H1 (cell line): ENCODE measurements at regions of chr12 and their contacts with region 1.

Region 1: DNA sequence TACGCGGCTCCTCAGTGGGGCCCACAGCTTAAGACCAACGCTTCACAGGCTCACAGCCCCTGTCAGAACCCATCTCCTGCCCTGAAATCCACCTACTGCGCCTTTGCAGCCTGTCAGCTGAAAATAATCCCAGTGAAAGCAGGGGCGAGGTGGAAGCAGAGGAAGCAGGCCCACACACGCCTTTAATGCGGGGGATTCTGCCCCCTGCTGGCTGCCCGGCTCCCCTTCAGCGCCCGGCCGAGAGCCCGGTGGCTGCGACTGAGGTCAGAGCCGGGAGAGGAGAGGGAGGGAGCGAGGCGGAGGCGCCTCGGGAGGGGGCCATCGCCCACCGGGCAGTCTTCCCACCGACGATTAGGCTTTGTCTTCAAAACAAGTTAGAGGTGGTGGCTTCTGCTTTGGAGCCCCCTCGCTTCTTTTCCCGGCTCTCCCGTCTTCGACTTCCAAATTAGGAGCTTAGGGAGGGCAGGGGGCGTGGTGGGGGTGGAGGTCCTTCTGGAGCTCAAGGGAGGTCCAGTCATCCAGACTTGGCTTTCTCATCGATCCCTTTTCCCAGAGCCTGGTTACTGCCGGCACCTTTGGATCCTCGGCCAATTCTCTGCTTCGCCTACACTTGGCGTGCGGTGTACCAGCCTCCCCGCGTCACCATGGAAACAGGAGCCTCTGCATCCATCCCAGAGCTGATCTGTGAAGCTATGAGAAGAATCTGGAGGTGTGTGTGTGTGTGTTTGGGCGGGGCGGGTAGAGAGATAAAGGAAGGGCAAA is 25.2 kb upstream of the RND1 start:
- DNase-seq: peak; percentile 51 to 96
- H3K4me3 ChIP-seq: peak overlapping the region; percentile 10 to 65 (median 22)
- H3K27ac ChIP-seq: no peak overlapping the region
- H3K4me1 ChIP-seq: 0 out of 7 replicates have a peak, but pooled peaks cover 0 to 6% (median 2%) of the 10 kb centered on the region in 4 experiments
- H3K27me3 ChIP-seq: no peaks in the 10 kb centered on the region; a peak in 2 of 7 replicates
- CTCF ChIP-seq: peak; percentile 86 to 95 (median 91)
- EP300 ChIP-seq: no peak
- POLR2A ChIP-seq: no peak
- RAD21 ChIP-seq: peak; percentile 90 to 96

Region 2: GRCh38 chr12:48527891-48528675 is 362.8 kb before region 1 on chr12:
- CTCF ChIA-PET with region 1: no interaction called
- POLR2A ChIA-PET with region 1: no interaction called
- DNase-seq: no peak
- H3K4me3 ChIP-seq: no peak overlapping the region
- H3K27ac ChIP-seq: no peak overlapping the region
- H3K4me1 ChIP-seq: no peaks in the 10 kb centered on the region
- H3K27me3 ChIP-seq: no peaks in the 10 kb centered on the region
- CTCF ChIP-seq: no peak
- EP300 ChIP-seq: no peak
- POLR2A ChIP-seq: no peak
- RAD21 ChIP-seq: no peak

Region 3: GRCh38 chr12:48814262-48815125 is 76.3 kb before region 1 on chr12:
- CTCF ChIA-PET with region 1: interaction called, 13 read pairs
- POLR2A ChIA-PET with region 1: interaction called, 4 read pairs
- DNase-seq: peak in 1 of 2 experiments; percentile 94
- H3K4me3 ChIP-seq: peak overlapping the region; percentile 59 to 94 (median 88)
- H3K27ac ChIP-seq: no peak overlapping the region
- H3K4me1 ChIP-seq: peaks cover 0 to 27% (median 19%) of the 10 kb centered on the region in 4 experiments; a peak in 6 of 7 replicates
- H3K27me3 ChIP-seq: peaks cover 17 to 46% (median 36%) of the 10 kb centered on the region in 4 experiments
- CTCF ChIP-seq: peak in 2 of 3 experiments; percentile 95 to 99; a peak in 3 of 4 replicates
- EP300 ChIP-seq: no peak; a peak in 1 of 3 replicates
- POLR2A ChIP-seq: no peak
- RAD21 ChIP-seq: peak in 1 of 2 experiments; percentile 48; a peak in 2 of 4 replicates

Region 4: GRCh38 chr12:48873096-48873495 is 17.7 kb before region 1 on chr12:
- CTCF ChIA-PET with region 1: interaction called, 678 read pairs
- POLR2A ChIA-PET with region 1: interaction called, 651 read pairs
- DNase-seq: no peak
- H3K4me3 ChIP-seq: no peak overlapping the region
- H3K27ac ChIP-seq: no peak overlapping the region
- H3K4me1 ChIP-seq: no peaks in the 10 kb centered on the region
- H3K27me3 ChIP-seq: no peaks in the 10 kb centered on the region
- CTCF ChIP-seq: no peak
- EP300 ChIP-seq: no peak
- POLR2A ChIP-seq: no peak
- RAD21 ChIP-seq: no peak

Region 5: GRCh38 chr12:48910196-48910595 is 19.4 kb after region 1 on chr12:
- CTCF ChIA-PET with region 1: interaction called, 79 read pairs
- POLR2A ChIA-PET with region 1: no interaction called
- DNase-seq: no peak
- H3K4me3 ChIP-seq: no peak overlapping the region
- H3K27ac ChIP-seq: no peak overlapping the region
- H3K4me1 ChIP-seq: no peaks in the 10 kb centered on the region
- H3K27me3 ChIP-seq: no peaks in the 10 kb centered on the region
- CTCF ChIP-seq: no peak
- EP300 ChIP-seq: no peak
- POLR2A ChIP-seq: no peak
- RAD21 ChIP-seq: no peak

Region 6: GRCh38 chr12:48924617-48925303 is 33.9 kb after region 1 on chr12:
- CTCF ChIA-PET with region 1: interaction called, 12 read pairs
- POLR2A ChIA-PET with region 1: interaction called, 4 read pairs
- DNase-seq: peak; percentile 29 to 79
- H3K4me3 ChIP-seq: peak overlapping the region; percentile 61 to 86 (median 70)
- H3K27ac ChIP-seq: peak overlapping the region; percentile 55
- H3K4me1 ChIP-seq: peaks cover 0 to 14% (median 4%) of the 10 kb centered on the region in 4 experiments; a peak in 4 of 7 replicates
- H3K27me3 ChIP-seq: no peaks in the 10 kb centered on the region; a peak in 1 of 7 replicates
- CTCF ChIP-seq: peak; percentile 64 to 71 (median 69)
- EP300 ChIP-seq: no peak
- POLR2A ChIP-seq: peak; percentile 27 to 44; a peak in 2 of 3 replicates
- RAD21 ChIP-seq: peak; percentile 46 to 61

Region 7: GRCh38 chr12:48988030-48988649 is 97.3 kb after region 1 on chr12:
- CTCF ChIA-PET with region 1: interaction called, 10 read pairs
- POLR2A ChIA-PET with region 1: no interaction called
- DNase-seq: peak in 1 of 2 experiments; percentile 98
- H3K4me3 ChIP-seq: no peak overlapping the region
- H3K27ac ChIP-seq: no peak overlapping the region
- H3K4me1 ChIP-seq: peaks cover 0 to 4% (median 0%) of the 10 kb centered on the region in 4 experiments; a peak in 2 of 7 replicates
- H3K27me3 ChIP-seq: peaks cover 18 to 55% (median 44%) of the 10 kb centered on the region in 4 experiments
- CTCF ChIP-seq: peak in 2 of 3 experiments; percentile 86 to 98; a peak in 3 of 4 replicates
- EP300 ChIP-seq: no peak
- POLR2A ChIP-seq: no peak
- RAD21 ChIP-seq: peak; percentile 56 to 65

Region 8: GRCh38 chr12:49031553-49032162 is 140.8 kb after region 1 on chr12:
- CTCF ChIA-PET with region 1: no interaction called
- POLR2A ChIA-PET with region 1: no interaction called
- DNase-seq: no peak
- H3K4me3 ChIP-seq: no peak overlapping the region
- H3K27ac ChIP-seq: no peak overlapping the region
- H3K4me1 ChIP-seq: no peaks in the 10 kb centered on the region
- H3K27me3 ChIP-seq: no peaks in the 10 kb centered on the region
- CTCF ChIP-seq: no peak
- EP300 ChIP-seq: no peak
- POLR2A ChIP-seq: no peak
- RAD21 ChIP-seq: no peak

Region 9: GRCh38 chr12:49043856-49044258 is 153.0 kb after region 1 on chr12:
- CTCF ChIA-PET with region 1: no interaction called
- POLR2A ChIA-PET with region 1: no interaction called
- DNase-seq: peak in 1 of 2 experiments; percentile 96
- H3K4me3 ChIP-seq: no peak overlapping the region
- H3K27ac ChIP-seq: no peak overlapping the region
- H3K4me1 ChIP-seq: no peaks in the 10 kb centered on the region
- H3K27me3 ChIP-seq: no peaks in the 10 kb centered on the region
- CTCF ChIP-seq: peak in 2 of 3 experiments; percentile 71 to 99; a peak in 3 of 4 replicates
- EP300 ChIP-seq: no peak
- POLR2A ChIP-seq: no peak
- RAD21 ChIP-seq: peak; percentile 19 to 20; a peak in 2 of 4 replicates

Region 10: DNA sequence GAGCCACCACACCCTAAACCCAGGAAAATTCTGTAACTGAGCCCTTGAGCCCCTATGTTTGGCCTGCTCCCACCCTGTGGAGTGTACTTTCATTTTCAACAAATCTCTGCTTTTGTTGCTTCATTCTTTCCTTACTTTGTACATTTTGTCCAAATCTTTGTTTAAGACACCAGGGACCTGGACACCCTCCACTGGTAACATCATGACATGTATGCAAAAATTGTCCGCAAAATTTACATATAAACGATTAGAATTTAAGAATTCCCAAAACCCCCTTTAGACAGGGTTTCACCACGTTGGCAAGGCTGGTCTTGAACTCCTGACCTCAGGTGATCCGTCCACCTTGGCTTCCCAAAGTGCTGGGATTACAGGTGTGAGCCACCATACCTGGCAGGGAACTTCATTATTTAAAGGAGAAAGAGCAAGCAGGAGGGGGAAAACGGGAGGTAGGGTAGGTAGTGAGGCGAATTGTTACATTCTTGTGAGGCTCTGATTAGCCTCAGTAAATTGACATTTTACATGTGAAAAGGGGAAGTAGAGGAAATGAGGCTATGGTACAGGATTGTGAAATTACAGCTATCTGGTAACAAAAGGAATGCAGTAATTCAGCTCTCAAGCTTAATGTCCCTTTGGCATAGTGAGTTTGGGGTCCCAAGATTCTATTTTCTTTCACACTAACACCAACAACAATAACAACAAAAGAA is 270.4 kb after region 1 on chr12:
- CTCF ChIA-PET with region 1: no interaction called
- POLR2A ChIA-PET with region 1: no interaction called
- DNase-seq: no peak
- H3K4me3 ChIP-seq: no peak overlapping the region
- H3K27ac ChIP-seq: no peak overlapping the region
- H3K4me1 ChIP-seq: peaks cover 0 to 3% (median 0%) of the 10 kb centered on the region in 4 experiments; a peak in 1 of 7 replicates
- H3K27me3 ChIP-seq: no peaks in the 10 kb centered on the region
- CTCF ChIP-seq: no peak
- EP300 ChIP-seq: no peak
- POLR2A ChIP-seq: no peak
- RAD21 ChIP-seq: no peak